ENCODE measurements at regions of chr4 and their contacts with region 1.

Region 1: DNA sequence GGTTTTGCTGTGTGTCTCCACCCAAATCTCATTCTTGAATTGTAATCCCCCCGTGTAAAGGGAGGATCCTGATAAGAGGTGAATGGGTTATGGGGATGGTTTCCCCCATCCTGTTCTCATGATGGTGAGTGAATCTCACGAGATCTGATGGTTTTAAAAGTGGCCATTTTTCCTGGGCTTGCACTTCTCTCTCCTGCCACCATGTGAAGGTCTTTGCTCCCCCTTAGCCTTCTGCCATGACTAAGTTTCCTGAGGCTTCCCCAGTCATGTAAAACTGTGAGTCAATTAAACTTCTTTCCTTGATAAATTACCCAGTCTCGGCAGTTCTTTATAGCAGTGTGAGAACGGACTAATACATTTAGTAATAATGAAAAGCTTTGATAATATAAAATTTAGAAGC is 46.9 kb downstream of the ANTXR2 start:
- DNase-seq: no peak
- ATAC-seq: no peak
- H3K4me3 ChIP-seq: no peak overlapping the region
- H3K27ac ChIP-seq: no peak overlapping the region
- H3K4me1 ChIP-seq: peaks cover 0 to 3% (median 0%) of the 10 kb centered on the region in 9 donors
- H3K27me3 ChIP-seq: no peaks in the 10 kb centered on the region
- CTCF ChIP-seq: no peak

Region 2: GRCh38 chr4:79798047-79798446 is 228.1 kb before region 1 on chr4:
- intact Hi-C with region 1: no loop called
- DNase-seq: no peak
- ATAC-seq: no peak
- H3K4me3 ChIP-seq: no peak overlapping the region
- H3K27ac ChIP-seq: no peak overlapping the region
- H3K4me1 ChIP-seq: no peaks in the 10 kb centered on the region
- H3K27me3 ChIP-seq: no peaks in the 10 kb centered on the region
- CTCF ChIP-seq: no peak

Region 3: GRCh38 chr4:80058740-80059139 is 32.6 kb after region 1 on chr4:
- intact Hi-C with region 1: loop called in 1 of 10 experiments (anchors 1 kb)
- DNase-seq: no peak
- ATAC-seq: peak in 7 of 8 donors; percentile 52 to 86 (median 69)
- H3K4me3 ChIP-seq: peak overlapping the region in 1 of 10 donors; percentile 1
- H3K27ac ChIP-seq: peak overlapping the region in 1 of 10 donors; percentile 64
- H3K4me1 ChIP-seq: peaks cover 0 to 40% (median 0%) of the 10 kb centered on the region in 9 donors
- H3K27me3 ChIP-seq: no peaks in the 10 kb centered on the region
- CTCF ChIP-seq: no peak